GM18951 (cell line): ENCODE measurements at regions of chr20 and their contacts with region 1.

Region 1: GRCh38 chr20:815914-816606 is 17.5 kb upstream of the FAM110A start:
- POLR2A ChIP-seq: no peak

Region 2: GRCh38 chr20:956330-956951 is 140.4 kb after region 1 on chr20:
- in situ Hi-C with region 1: loop called (anchors 5 kb)
- POLR2A ChIP-seq: no peak